Spleen (tissue), 13 donors: ENCODE measurements at regions of chr6 and their contacts with region 1.

Region 1: DNA sequence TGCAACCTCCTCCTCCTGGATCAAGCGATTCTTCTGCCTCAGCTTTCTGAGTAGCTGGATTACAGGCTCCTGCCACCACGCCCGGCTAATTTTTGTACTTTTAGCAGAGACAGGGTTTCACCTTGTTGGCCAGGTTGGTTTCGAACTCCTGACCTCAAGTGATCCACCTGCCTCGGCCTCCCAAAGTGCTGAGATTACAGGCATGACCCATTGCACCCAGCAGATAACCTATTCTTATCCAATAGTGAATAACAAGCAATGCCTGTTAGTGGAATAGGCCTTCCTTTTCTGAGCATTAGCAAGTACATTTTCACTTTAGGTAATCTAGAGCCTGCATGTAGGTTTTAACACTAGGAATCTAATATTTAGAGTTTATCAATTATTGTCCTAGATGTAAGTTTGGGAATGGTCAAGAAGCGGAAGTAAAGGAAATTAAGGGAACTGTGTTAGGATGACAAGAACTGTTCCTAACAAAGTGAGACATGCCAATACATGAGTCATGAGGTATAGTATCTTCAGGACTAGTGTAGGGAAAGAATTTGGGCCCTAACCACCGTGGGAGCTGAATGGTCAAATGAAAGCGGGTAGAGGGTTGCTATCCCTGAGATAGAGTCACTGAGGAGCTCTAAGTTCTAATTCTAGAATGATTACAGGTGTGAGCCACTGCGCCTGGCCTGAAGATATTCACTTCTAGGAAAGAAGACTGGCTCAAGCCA is 15.0 kb downstream of the BLTP3A start:
- DNase-seq: no peak
- H3K4me3 ChIP-seq: no peak overlapping the region
- H3K27ac ChIP-seq: no peak overlapping the region
- H3K4me1 ChIP-seq: no peaks in the 10 kb centered on the region
- H3K27me3 ChIP-seq: no peaks in the 10 kb centered on the region
- CTCF ChIP-seq: no peak
- POLR2A ChIP-seq: no peak

Region 2: DNA sequence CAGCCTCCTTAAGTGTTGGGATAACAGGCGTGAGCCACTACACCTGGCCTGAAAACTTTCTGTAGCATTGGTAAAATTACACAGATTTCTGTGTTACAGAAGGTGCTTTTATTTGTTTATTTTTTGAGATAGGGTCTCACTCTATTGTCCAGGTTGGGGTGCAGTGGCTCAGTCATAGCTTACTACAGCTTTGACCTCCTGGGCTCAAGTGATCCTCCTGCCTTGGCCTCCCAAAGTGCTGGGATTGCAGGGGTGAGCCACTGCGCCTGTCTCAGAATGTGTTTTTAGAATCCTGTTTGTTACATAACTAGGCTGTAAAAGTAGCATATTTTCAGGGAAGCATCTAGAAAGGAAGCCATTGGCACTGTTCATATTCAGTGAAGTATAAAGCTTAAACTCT is 31.9 kb before region 1 on chr6:
- intact Hi-C with region 1: loop called (anchors 2 kb)
- DNase-seq: no peak
- H3K4me3 ChIP-seq: no peak overlapping the region
- H3K27ac ChIP-seq: peak overlapping the region in 1 of 8 donors; percentile 46
- H3K4me1 ChIP-seq: peaks cover 0 to 11% (median 5%) of the 10 kb centered on the region in 6 donors
- H3K27me3 ChIP-seq: no peaks in the 10 kb centered on the region
- CTCF ChIP-seq: no peak
- POLR2A ChIP-seq: no peak